Colonic mucosa (tissue), 4 donors: ENCODE measurements at regions of chr19 and their contacts with region 1.

Region 1: GRCh38 chr19:17469481-17470067 is 750 bp upstream of the SLC27A1 start:
- DNase-seq: peak; percentile 99
- H3K4me3 ChIP-seq: peak overlapping the region; percentile 66
- H3K27ac ChIP-seq: peak overlapping the region; percentile 68
- H3K4me1 ChIP-seq: no peaks in the 10 kb centered on the region
- H3K27me3 ChIP-seq: no peaks in the 10 kb centered on the region
- CTCF ChIP-seq: no peak

Region 2: DNA sequence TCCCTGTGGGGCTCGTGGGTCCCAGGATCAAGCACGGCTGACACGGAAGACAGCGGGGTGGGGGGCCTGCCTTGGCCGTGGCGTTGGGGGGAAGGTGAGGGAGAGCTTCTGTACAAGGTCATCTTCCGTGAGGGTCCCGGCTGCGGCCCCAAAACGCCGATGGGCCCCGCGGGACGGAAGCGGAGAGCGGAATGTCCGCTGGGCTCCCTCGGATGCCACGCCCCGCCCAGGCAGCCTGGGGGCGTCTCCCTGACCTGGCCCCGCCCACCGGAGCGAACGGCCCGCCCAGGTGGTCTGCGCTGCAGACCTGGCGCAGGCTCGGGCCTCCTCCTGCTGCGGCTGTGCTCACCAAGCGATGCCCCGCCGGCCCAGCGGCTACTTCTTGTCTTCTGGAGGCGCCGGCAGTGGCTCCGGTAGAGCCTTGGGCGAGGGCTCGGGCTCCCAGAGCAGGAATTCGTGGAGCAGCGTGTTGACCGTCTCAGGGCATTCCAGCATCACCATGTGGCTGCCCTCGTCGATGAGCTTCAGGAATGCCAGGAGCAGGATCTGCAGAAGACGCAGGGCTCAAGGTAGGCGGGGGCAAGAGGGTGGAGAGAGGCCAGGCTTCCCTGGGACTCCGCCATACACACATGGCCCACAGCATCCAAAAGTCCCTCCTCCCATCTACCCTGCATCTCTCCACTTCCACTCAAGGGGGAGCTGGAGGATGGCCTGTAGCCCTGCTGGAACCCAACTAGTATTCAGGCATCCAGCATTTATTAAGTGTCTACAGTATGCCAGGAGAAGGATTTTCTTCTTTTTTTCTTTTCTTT is 177.1 kb before region 1 on chr19:
- intact Hi-C with region 1: loop called (anchors 10 kb)
- DNase-seq: peak; percentile 87
- H3K4me3 ChIP-seq: peak overlapping the region; percentile 63
- H3K27ac ChIP-seq: peak overlapping the region; percentile 54
- H3K4me1 ChIP-seq: no peaks in the 10 kb centered on the region
- H3K27me3 ChIP-seq: no peaks in the 10 kb centered on the region
- CTCF ChIP-seq: peak; percentile 70

Region 3: DNA sequence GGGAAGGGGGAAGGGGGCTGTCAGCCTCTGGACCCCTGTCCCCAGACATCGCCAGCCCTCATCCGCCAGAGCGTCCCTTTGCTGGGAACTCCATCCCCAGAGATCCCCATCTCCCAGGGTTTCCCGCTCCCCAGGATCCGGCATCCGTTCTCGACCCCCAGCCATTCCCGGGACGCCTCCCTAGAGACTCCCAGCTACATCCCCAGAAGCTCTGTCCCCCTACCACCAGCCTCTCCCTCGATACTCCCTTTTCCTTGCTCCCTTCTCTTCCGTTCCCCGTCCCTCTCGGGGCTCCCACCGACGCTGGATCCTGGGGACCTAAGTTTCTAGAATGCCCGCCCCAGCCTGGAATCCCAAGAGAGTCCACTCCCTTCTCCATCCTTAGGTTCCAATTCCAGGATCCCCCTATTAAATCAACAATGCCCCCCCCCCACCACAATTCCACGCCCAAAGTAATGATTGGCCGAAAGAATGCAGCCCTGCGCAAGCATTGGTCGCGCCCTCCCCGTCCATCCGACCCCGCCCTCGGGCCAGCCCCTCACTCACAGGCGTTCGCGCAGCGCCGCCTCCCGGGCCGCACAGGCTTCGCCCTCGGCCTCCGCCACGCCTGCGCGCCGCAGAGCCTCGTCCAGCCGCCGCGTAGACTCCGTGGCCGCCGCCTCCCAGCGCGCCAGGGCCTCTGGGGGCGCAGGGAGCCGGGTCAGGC is 78.8 kb before region 1 on chr19:
- intact Hi-C with region 1: loop called (anchors 5 kb)
- DNase-seq: peak; percentile 89
- H3K4me3 ChIP-seq: peak overlapping the region; percentile 35
- H3K27ac ChIP-seq: no peak overlapping the region
- H3K4me1 ChIP-seq: peaks cover 6% of the 10 kb centered on the region
- H3K27me3 ChIP-seq: peaks cover 12% of the 10 kb centered on the region
- CTCF ChIP-seq: peak; percentile 61

Region 4: DNA sequence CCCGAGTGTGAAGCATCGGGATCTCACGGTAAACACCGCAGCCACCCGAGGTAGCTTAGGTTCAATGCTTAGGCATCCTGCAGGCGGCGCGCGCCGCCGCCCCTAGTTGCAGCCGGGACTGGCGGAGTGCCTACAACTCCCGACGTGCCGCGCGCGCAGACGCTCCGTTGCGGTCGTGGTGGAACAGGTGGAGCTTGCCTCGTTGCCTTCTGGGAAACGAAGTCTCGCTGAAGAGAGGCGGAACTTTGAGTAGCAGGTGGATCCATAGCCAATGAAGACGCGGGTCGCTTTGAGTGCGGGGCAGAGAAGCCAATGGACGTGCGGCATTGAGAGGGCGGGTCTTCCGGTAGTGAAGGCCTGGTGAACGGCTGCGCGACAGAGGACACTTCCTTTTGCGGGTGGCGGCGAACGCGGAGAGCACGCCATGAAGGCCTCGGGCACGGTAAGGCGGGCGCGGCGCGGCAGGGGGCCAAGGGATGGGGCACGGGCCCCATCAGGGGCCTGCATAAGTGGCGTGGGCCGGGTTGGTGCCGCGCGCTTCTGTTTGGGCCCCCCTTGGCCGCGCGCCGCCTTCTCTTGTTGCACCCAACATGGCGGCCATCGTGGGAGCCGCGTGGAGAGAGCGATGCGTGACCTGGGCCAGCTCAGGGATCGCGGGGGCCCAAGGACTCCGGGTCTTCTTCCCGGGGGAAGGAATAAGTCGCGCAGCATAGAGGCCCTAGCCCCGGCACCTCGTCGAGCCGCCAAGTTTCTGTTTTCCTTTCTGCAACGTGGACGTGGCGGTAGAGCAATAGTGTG is 390.2 kb after region 1 on chr19 and contains the start of gene RPL18A:
- intact Hi-C with region 1: loop called (anchors 10 kb)
- DNase-seq: peak; percentile 98
- H3K4me3 ChIP-seq: peak within 1 kb of the TSS; percentile 92
- H3K27ac ChIP-seq: peak within 1 kb of the TSS; percentile 75
- H3K4me1 ChIP-seq: peaks cover 4% of the 10 kb centered on the region
- H3K27me3 ChIP-seq: no peaks in the 10 kb centered on the region
- CTCF ChIP-seq: peak; percentile 74
- total RNA-seq, gene RPL18A: 1,592 to 1,923 TPM